Thyroid gland (tissue), 4 donors: ENCODE measurements at regions of chr1 and their contacts with region 1.

Region 1: GRCh38 chr1:53485478-53486394 is 26.5 kb downstream of the DMRTB1 start:
- DNase-seq: peak; percentile 83
- H3K4me3 ChIP-seq: no peak overlapping the region
- H3K27ac ChIP-seq: no peak overlapping the region
- H3K4me1 ChIP-seq: no peaks in the 10 kb centered on the region
- H3K27me3 ChIP-seq: no peaks in the 10 kb centered on the region
- CTCF ChIP-seq: peak; percentile 68 to 83 (median 80)
- POLR2A ChIP-seq: no peak

Region 2: DNA sequence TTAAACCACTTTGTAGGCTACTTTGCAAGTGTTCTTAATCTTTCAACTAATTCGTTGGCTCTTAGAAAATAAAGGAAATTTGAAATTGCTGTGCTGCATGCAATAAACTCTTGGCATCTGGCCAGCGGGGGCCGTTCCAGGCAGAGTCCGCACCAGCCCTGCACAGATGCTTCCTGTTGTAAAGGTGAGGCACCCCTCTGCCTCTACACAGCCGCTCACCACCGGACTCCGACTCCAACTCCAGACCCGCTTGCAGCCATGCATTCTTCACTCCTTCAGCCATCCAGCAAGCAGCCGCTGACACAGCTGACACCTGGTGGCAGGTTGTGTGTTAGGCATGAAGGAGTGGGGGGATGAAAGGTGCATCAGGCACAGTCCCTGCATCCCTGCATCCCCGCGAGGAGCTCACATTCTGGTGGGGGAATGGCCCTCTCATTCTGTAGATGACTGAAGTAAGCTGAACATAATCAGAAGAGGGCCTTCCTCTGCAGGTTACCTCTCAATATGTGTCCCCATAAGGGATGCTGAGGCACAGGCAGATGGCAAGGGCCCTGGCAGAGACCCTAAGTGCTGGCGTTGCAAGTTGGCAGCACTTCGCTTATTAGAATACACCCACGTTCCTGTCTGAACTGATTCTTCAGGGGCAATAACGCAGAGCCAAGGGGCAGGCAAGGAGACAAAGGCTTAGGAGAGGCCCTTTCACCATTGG is 196.4 kb after region 1 on chr1:
- intact Hi-C with region 1: loop called (anchors 5 kb)
- DNase-seq: peak; percentile 59 to 60
- H3K4me3 ChIP-seq: no peak overlapping the region
- H3K27ac ChIP-seq: no peak overlapping the region
- H3K4me1 ChIP-seq: peaks cover 0 to 6% of the 10 kb centered on the region in 2 donors
- H3K27me3 ChIP-seq: no peaks in the 10 kb centered on the region
- CTCF ChIP-seq: peak in 5 of 6 experiments; percentile 25 to 57 (median 47)
- POLR2A ChIP-seq: no peak

Region 3: GRCh38 chr1:53752281-53752680 is 266.5 kb after region 1 on chr1:
- intact Hi-C with region 1: loop called (anchors 2 kb)
- DNase-seq: no peak
- H3K4me3 ChIP-seq: no peak overlapping the region
- H3K27ac ChIP-seq: no peak overlapping the region
- H3K4me1 ChIP-seq: no peaks in the 10 kb centered on the region
- H3K27me3 ChIP-seq: no peaks in the 10 kb centered on the region
- CTCF ChIP-seq: no peak
- POLR2A ChIP-seq: no peak